ENCODE measurements at regions of chr5 and their contacts with region 1.

Region 1: DNA sequence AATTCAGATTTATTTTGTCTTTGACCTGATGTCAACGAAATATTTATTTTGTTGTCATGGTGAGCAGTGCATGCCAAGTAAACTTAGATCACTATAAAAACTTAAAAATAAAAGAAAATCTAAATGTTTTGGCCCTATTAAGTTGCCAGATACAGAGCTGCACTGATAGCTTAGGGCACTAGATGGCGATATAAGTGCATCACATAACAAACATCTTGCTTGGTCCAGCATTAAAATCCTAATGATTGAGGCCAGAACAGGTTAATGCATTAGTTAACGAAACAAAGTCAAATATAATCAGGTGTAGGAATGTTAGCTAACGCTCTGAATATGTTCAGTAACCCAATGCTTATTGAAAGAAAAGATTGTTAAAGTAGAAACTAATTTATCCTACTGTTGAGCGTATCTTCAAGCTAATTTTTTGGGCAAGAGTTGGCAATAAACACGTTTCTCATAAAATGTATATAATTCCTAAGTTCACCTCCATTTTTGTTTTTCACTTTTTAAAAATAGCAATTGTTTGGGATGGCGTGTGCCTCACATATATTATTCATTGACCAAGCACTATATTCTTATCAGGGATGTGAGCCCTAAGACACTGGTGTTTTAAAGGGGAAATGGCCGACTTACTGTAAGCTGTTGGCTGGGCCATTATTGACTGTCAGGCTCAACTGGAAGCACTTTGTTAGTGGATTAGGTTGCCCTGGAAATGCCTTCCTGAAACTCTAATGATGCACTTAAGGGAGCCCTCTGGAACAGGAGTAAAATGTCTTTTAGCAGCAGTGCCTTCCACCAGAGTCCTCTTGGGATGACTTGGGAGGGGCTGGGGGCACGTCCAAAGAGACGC is 33.3 kb downstream of the KCTD16 start:
- DNase-seq: peak in 3 of 10 donors; percentile 11 to 59 (median 19)
- H3K4me3 ChIP-seq: peak overlapping the region in 25 of 59 donors; percentile 47 to 74 (median 64)
- H3K27ac ChIP-seq: peak overlapping the region in 11 of 59 donors; percentile 4 to 94 (median 73)
- H3K27me3 ChIP-seq: peaks cover 0 to 20% (median 0%) of the 10 kb centered on the region in 45 donors
- CTCF ChIP-seq: peak; percentile 69 to 97 (median 88)

Region 2: DNA sequence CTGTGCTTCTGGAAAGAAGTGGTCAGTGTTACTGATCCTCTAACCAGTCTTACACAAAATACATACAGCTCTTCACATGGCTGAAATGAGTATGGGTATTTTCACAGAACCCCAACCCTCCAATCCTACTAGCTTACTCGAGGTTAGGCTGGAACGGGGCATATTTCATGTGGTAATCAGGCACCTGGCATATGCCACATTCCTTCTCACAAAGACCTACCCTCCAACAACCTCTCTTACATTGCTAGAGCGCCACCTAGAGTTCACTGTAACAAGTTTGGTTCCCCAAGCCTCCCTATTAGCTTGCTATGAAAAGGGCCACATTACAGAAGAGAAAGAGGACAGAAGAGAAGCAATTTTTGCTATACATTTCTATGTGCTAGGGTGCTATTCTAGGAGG is 1033.9 kb after region 1 on chr5:
- intact Hi-C with region 1: loop called in 1 of 2 experiments (anchors 5 kb)
- DNase-seq: no peak
- H3K4me3 ChIP-seq: no peak overlapping the region
- H3K27ac ChIP-seq: peak overlapping the region in 1 of 59 donors; percentile 20
- H3K27me3 ChIP-seq: peaks cover 0 to 6% (median 0%) of the 10 kb centered on the region in 45 donors
- CTCF ChIP-seq: peak in 50 of 56 donors; percentile 18 to 63 (median 36)

Region 3: DNA sequence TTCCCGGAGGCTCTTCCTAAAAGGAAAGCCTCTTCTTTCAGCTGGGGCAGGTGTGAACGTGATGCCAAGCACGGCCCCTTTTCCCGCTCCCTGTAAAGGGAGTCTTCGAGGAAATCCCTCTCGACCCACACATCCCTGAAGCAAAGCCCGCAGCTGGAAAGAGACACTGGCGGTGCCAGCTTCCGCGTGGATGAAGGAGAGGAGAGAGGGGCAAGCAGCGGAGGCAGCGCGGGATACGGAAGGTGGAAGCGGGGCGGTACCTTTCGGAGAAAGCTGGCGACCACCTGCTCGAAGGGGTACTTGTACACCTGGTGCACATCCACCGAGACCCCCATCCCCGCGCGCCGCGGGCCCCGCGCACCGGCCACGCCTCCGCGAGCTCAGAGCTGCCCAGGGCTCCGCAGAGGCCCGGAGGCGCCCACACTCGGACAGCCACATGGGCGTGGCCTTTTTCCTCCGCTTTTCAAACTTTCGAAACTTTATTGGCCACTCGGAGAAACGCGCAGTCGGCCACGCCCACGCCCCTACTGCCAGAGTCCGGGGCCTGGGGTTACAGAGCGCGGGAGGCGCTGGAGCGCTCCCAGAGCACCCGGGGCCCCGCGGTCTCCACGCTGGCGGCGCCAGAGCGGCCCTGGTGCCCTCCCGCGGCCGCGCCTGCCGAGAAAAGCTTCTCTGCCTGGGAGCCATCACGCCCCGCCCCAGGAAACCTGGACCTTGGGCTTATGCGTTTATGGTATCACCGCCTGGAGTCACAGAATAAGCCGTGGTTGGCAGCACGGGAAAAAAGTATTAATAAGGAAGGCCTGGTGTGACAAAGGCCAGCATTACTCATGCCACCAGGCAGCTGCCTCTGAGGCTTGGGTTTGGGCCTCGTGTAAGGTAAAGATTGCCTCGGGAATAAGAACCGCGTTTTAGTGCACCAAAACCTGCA is 1631.2 kb after region 1 on chr5 and contains the start of gene PRELID2:
- intact Hi-C with region 1: loop called in 1 of 2 experiments (anchors 10 kb)
- DNase-seq: peak; percentile 13 to 85 (median 68)
- H3K4me3 ChIP-seq: peak within 1 kb of the TSS; percentile 44 to 94 (median 78)
- H3K27ac ChIP-seq: peak within 1 kb of the TSS in 43 of 59 donors; percentile 5 to 85 (median 49)
- H3K27me3 ChIP-seq: no peaks in the 10 kb centered on the region
- CTCF ChIP-seq: peak in 36 of 56 donors; percentile 18 to 65 (median 32)
- total RNA-seq, gene PRELID2: 9.0 to 43.7 (median 22.9) TPM

Region 4: DNA sequence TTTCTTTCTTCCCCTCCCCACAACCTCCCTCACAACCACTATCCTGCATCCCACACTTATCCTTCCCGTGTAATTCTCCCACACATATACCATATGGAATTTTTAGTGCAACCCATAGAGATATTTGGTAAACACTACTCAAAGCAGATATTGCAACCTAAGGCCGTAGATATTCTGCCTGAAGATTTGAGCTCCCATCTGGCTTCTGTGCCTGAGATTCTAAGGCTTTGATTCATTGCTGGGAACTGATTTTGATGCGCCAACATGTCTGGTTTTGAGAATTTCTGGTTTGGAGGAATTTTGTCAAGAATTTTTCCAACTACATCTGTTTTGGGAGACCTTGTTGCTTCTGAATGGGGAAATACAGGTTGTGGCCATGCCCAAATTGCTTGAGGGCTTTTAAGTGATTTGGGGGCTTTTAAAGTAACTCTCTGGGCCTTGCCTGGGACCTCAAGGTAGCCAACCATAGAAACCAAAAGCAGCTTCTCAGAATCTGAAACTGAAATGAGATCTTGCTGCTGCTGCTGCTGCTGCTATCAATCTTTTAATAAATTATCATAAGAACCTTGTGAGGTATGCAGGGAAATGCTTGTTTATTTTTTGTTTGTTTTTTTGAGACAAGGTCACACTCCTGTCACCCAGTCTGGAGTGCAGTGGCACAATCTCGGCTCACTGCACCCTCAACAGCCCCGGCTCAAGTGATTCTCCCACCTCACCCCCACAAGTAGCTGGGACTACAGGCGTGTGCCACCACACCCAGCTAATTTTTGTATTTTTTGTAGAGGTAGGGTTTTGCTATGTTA is 1865.2 kb after region 1 on chr5:
- intact Hi-C with region 1: loop called in 1 of 2 experiments (anchors 10 kb)
- DNase-seq: no peak
- H3K4me3 ChIP-seq: no peak overlapping the region
- H3K27ac ChIP-seq: peak overlapping the region in 11 of 59 donors; percentile 7 to 64 (median 35)
- H3K27me3 ChIP-seq: no peaks in the 10 kb centered on the region
- CTCF ChIP-seq: no peak

Region 5: DNA sequence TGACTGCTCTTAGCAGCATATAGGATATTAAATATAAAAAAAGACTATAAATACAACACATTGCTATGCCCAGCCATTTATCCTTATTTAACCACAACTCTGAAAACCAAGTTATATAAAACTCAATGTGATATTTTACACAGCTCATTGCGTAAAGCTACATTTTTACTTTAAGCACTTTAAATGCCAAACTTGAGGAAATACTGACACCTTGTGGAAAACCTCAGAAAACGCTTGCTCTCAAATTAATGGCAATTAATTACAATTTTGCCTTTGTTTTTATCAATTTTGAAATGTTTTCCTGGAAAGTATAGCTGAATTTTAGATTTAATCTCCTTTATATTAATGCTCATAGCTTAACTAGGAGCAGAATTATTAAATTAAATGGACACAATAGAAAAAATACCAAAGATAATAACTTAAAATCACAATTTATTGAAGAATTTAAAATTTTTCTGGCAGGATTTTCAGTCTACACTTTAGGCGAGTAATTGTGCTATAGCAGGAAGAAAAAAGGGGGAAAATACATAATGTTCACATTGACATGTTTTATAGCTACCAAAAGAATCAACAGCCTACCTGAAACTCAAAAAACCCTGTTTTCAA is 1926.6 kb after region 1 on chr5:
- intact Hi-C with region 1: loop called (anchors 10 kb)
- DNase-seq: no peak
- H3K4me3 ChIP-seq: no peak overlapping the region
- H3K27ac ChIP-seq: peak overlapping the region in 2 of 59 donors; percentile 28 to 54
- H3K27me3 ChIP-seq: no peaks in the 10 kb centered on the region
- CTCF ChIP-seq: peak; percentile 53 to 91 (median 74)